ENCODE measurements at regions of chr3 and their contacts with region 1.

Region 1: GRCh38 chr3:43207628-43208085 is 78.7 kb upstream of the SNRK start:
- DNase-seq: peak; percentile 68
- H3K4me3 ChIP-seq: no peak overlapping the region
- H3K27me3 ChIP-seq: peaks cover 1% of the 10 kb centered on the region; the same call in 1 of the 2 replicates
- CTCF ChIP-seq: no peak

Region 2: DNA sequence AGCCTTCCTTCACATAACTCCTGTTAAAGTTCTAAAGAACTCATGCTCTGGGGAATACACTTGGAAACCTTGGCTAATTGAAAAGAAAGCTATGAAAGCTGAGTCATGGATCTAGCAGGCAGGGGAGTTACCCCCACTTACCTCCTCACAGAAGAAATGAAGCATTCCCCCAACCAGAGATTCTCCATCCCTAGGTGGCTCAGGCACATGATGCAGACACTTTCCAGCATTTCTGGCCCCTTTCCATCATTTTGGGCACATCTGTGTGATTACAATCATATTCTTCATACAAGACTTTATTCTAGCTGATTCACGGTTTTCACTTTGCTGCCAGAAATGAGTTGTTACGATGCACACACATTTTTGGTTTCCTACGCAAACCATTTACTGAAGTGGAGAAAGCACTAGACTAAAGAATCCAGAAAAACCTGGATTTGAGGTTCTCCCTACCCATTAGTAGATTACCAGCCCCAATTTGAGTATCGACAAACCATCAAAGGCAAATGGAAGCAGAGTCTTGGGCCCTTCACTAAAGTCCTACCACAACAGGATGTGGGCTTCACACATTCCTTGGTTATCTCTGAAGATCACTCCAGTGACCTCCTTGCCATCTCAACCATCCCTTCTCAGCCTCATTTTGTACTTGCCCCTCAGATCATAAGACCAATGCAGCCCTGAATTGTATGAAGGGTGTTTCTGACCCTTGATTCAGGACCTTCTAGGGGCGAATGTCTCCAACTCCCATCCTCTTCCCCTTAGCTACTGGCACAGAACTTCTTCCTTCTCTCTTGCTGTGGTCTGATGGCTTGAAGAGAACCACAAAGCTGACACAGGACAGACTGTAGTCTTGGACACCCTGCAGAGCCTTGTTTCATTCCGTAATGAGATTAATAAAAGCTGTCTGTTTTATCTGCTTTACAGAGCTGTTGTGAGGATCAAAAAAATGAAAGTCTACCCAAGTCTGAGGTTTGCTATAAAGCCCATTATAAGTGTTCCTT is 36.2 kb after region 1 on chr3:
- CTCF ChIA-PET with region 1: no interaction called
- POLR2A ChIA-PET with region 1: interaction called, 10 read pairs
- DNase-seq: peak; percentile 74
- H3K4me3 ChIP-seq: no peak overlapping the region
- H3K27me3 ChIP-seq: peaks cover 10% of the 10 kb centered on the region
- CTCF ChIP-seq: no peak